Activated CD4-positive, alpha-beta memory T cell treated with anti-CD3 and anti-CD28 coated beads for 36 hours (primary cell): ENCODE measurements at regions of chr11 and their contacts with region 1.

Region 1: DNA sequence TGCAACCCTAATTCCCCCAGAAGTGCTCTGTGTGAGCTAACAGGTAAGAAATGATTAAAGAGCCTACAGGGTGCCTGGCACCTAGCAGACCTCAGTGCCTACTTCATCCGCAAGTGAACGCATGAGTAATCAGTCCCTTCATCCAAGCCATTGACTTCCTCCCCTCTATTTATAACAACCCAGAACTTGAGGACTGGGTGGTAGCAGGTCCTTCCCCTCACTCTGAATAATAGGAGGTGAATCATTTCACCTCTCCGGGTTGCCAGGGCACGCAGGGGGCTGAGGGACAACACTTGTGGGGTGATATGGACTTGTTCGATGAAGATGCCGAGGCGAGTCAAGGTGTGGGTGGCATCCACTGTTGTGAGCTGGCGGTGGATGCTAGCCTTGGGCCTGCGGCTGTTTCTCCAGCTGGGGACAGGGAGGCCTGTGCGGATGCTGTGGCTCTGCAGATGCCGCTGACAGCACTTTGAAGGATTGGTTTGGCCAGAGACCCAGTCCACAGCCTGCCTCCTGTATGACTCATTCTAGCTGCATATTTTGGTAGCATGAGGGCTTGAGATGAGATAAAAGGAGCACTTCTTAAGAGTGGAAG is 11.7 kb upstream of the SORL1-AS1 start:
- DNase-seq: peak; percentile 94
- H3K4me3 Mint-ChIP-seq: peak overlapping the region; percentile 63
- H3K27ac Mint-ChIP-seq: peak overlapping the region; percentile 99
- H3K4me1 Mint-ChIP-seq: peaks cover 98% of the 10 kb centered on the region
- H3K27me3 Mint-ChIP-seq: no peaks in the 10 kb centered on the region

Region 2: GRCh38 chr11:121292495-121293287 is 171.8 kb before region 1 on chr11 and contains the start of gene SC5D:
- CTCF ChIA-PET with region 1: no interaction called
- POLR2A ChIA-PET with region 1: interaction called, 3 read pairs
- intact Hi-C with region 1: loop called (anchors 1 kb)
- DNase-seq: peak; percentile 96
- H3K4me3 Mint-ChIP-seq: peak within 1 kb of the TSS; percentile 95
- H3K27ac Mint-ChIP-seq: peak within 1 kb of the TSS; percentile 95
- H3K4me1 Mint-ChIP-seq: peaks cover 41% of the 10 kb centered on the region
- H3K27me3 Mint-ChIP-seq: no peaks in the 10 kb centered on the region
- total RNA-seq, gene SC5D: 23.3 to 24.7 TPM

Region 3: DNA sequence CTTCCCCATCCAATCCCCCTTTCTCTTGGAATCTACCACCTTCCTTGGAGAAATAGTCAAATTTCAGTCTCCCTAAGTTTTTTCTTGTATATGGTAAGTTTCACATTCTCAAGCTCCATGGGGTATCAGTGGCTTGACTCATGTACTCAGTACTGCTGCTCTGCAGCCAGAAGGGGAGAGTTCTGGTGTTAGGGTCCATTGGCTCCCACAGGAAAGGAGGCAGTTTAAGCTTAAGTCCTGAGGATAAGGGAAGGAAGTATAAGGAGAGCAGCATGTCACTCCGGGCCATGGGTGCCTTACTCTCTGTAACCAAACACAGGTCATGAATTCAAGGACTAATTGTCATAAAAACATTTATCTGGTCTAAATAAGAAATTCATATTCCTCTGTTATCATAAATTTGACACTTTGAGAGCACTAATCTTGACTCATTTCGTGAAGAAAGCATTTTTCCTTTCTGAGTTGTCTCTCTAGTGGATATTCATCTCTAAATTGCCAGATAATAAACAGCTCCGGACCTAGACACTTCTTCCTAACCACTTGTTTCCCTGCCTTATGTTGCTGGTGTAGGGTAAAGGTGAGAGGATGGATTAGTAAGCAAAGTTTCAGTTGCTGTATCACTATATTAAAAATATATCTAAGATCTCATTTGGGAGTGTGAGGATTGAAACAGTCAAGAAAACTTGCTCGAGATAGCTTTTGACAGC is 32.5 kb before region 1 on chr11:
- CTCF ChIA-PET with region 1: interaction called, 3 read pairs
- POLR2A ChIA-PET with region 1: interaction called, 3 read pairs
- intact Hi-C with region 1: loop called (anchors 1 kb)
- DNase-seq: no peak
- H3K4me3 Mint-ChIP-seq: no peak overlapping the region
- H3K27ac Mint-ChIP-seq: peak overlapping the region; percentile 30
- H3K4me1 Mint-ChIP-seq: peaks cover 38% of the 10 kb centered on the region
- H3K27me3 Mint-ChIP-seq: no peaks in the 10 kb centered on the region

Region 4: GRCh38 chr11:121503051-121503450 is 38.6 kb after region 1 on chr11:
- CTCF ChIA-PET with region 1: no interaction called
- POLR2A ChIA-PET with region 1: no interaction called
- intact Hi-C with region 1: no loop called
- DNase-seq: no peak
- H3K4me3 Mint-ChIP-seq: no peak overlapping the region
- H3K27ac Mint-ChIP-seq: no peak overlapping the region
- H3K4me1 Mint-ChIP-seq: peaks cover 49% of the 10 kb centered on the region
- H3K27me3 Mint-ChIP-seq: no peaks in the 10 kb centered on the region

Region 5: DNA sequence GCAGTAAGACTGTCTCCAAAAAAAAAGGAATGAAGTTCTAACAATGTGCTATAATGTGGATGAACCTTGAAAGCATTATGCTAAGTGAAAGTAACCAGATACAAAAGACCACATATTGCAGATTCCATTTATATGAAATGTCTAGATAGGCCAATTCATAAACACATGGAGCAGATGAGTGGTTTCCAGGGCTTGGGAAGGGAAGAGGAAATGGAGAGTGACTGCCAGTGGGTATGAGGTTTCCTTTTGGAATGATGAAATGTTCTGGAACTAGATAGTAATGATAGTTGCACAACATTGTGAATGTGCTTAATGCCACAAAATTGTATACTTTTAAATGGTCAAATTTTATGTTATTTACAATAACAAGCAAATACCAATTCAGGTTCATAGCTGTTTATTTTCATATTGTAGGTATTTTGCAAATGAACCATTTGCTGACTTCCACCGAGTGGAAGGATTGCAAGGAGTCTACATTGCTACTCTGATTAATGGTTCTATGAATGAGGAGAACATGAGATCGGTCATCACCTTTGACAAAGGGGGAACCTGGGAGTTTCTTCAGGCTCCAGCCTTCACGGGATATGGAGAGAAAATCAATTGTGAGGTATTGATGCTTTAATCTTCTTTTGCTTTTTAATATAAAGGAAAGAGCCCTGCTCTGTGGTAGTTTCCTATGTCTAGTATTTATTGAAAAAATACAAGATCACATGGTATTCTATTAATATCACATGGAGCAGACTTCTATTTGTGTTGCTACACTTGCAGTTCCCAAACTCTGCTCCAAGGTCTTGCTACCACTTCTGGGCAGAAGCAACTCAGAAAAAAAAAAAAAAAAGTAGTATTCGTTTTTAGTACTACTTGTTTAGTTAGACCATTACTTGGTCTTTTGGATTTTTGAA is 56.0 kb after region 1 on chr11:
- CTCF ChIA-PET with region 1: no interaction called
- POLR2A ChIA-PET with region 1: interaction called, 5 read pairs
- intact Hi-C with region 1: loop called (anchors 2 kb)
- DNase-seq: no peak
- H3K4me3 Mint-ChIP-seq: no peak overlapping the region
- H3K27ac Mint-ChIP-seq: no peak overlapping the region
- H3K4me1 Mint-ChIP-seq: peaks cover 51% of the 10 kb centered on the region
- H3K27me3 Mint-ChIP-seq: no peaks in the 10 kb centered on the region

Region 6: GRCh38 chr11:121582296-121582695 is 117.8 kb after region 1 on chr11:
- CTCF ChIA-PET with region 1: interaction called, 5 read pairs
- POLR2A ChIA-PET with region 1: interaction called, 3 read pairs
- intact Hi-C with region 1: loop called (anchors 2 kb)
- DNase-seq: peak; percentile 24
- H3K4me3 Mint-ChIP-seq: no peak overlapping the region
- H3K27ac Mint-ChIP-seq: peak overlapping the region; percentile 69
- H3K4me1 Mint-ChIP-seq: peaks cover 38% of the 10 kb centered on the region
- H3K27me3 Mint-ChIP-seq: no peaks in the 10 kb centered on the region